A673 (cell line): ENCODE measurements at regions of chr9 and their contacts with region 1.

Region 1: DNA sequence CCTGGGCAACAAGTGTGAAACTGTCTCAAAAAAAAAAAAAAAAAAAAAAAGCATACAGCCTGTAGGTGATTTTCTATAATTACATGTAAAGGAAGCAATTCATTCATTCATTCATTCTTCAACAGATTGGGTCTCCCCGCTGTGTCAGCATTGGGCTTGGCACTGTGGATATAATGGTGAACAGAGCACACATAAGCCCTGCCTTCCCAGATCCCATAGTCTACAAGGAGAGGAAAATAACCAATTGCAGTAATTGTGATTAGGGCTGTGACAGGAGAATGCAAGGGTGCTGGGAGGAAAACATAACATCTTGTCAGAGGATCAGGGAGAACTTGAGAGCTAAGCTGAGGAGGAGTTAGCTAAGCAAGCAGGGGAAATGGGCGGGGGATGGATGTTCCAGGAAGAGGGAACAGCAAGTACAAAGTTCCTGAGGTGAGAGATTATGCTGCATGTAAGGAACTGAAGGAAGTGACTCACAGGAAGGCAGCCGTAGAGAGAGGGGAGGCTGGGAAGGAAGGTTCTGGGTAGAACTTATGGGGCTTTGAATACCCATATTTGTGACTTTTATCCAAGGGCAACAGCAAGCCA is 24.0 kb upstream of the KLF9 start:
- DNase-seq: peak; percentile 52
- H3K4me3 ChIP-seq: no peak overlapping the region
- H3K27ac ChIP-seq: no peak overlapping the region
- H3K4me1 ChIP-seq: no peaks in the 10 kb centered on the region
- H3K27me3 ChIP-seq: no peaks in the 10 kb centered on the region
- CTCF ChIP-seq: no peak

Region 2: DNA sequence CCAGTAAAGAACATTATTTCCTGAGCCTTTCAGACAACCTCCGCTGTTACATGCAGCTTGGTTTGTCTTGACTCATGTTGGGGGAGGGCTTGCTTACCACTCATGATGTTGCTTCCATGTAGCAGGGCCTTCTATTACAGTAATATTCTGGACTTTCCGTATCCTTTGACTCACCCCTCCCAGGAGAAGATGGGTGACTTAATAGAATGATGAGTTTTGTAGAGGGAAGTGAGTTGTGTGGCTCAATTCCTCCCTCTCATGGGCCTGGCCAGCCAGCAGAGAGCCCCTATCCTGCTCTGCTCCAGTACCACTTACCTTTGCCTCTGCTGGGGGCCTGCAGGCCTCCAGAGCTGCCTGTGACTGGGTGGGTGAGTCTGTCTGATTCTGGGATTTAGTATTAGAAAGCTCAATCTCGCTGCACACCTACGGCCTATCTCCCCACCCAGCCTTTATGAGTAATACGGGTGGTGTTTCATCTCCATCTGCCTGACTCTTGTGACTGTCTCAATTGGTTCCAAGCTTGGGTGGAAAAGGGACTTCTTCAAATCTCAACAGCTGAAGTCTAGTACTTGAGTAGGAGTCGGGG is 28.6 kb after region 1 on chr9:
- CTCF ChIA-PET with region 1: no interaction called
- POLR2A ChIA-PET with region 1: no interaction called
- intact Hi-C with region 1: no loop called
- DNase-seq: no peak
- H3K4me3 ChIP-seq: no peak overlapping the region
- H3K27ac ChIP-seq: no peak overlapping the region
- H3K4me1 ChIP-seq: no peaks in the 10 kb centered on the region
- H3K27me3 ChIP-seq: no peaks in the 10 kb centered on the region
- CTCF ChIP-seq: no peak

Region 3: DNA sequence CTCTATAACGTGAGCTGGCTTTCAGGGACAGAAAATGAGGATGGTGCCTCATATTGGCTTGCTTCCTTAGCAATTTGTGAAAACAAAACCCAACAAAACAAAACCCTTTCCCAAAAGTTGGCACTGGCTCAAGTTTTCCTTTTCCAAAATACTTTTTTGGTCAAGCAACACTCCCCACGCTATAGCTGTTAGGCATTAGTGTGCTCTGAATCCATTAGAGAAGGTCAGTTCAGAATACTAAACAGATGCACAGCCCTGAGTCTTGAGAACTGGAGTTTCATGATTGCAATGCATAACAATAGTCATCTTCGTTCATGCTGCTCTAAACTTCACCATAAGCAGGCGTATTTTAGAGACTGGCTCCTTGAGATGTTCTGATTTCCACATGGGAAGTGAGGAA is 148.0 kb after region 1 on chr9:
- CTCF ChIA-PET with region 1: no interaction called
- POLR2A ChIA-PET with region 1: interaction called, 10 read pairs
- intact Hi-C with region 1: no loop called
- DNase-seq: no peak
- H3K4me3 ChIP-seq: no peak overlapping the region
- H3K27ac ChIP-seq: no peak overlapping the region
- H3K4me1 ChIP-seq: no peaks in the 10 kb centered on the region
- H3K27me3 ChIP-seq: peaks cover 19% of the 10 kb centered on the region
- CTCF ChIP-seq: no peak